ENCODE measurements at regions of chr5 and their contacts with region 1.

Region 1: GRCh38 chr5:141968914-141969608 is at the start of gene RNF14:
- DNase-seq: peak; percentile 93 to 97 (median 94)
- ATAC-seq: peak; percentile 97
- H3K4me3 ChIP-seq: peak within 1 kb of the TSS; percentile 72
- H3K27ac ChIP-seq: peak within 1 kb of the TSS; percentile 94
- H3K4me1 ChIP-seq: peaks cover 9 to 14% of the 10 kb centered on the region in 2 experiments; a peak in 3 of 5 replicates
- H3K27me3 ChIP-seq: no peaks in the 10 kb centered on the region
- CTCF ChIP-seq: peak; percentile 85 to 97 (median 86)
- EP300 ChIP-seq: no peak
- POLR2A ChIP-seq: peak; percentile 98
- RAD21 ChIP-seq: peak in 1 of 2 experiments; percentile 25; a peak in 1 of 4 replicates
- polyA plus RNA-seq, gene RNF14: 100 to 140 TPM

Region 2: DNA sequence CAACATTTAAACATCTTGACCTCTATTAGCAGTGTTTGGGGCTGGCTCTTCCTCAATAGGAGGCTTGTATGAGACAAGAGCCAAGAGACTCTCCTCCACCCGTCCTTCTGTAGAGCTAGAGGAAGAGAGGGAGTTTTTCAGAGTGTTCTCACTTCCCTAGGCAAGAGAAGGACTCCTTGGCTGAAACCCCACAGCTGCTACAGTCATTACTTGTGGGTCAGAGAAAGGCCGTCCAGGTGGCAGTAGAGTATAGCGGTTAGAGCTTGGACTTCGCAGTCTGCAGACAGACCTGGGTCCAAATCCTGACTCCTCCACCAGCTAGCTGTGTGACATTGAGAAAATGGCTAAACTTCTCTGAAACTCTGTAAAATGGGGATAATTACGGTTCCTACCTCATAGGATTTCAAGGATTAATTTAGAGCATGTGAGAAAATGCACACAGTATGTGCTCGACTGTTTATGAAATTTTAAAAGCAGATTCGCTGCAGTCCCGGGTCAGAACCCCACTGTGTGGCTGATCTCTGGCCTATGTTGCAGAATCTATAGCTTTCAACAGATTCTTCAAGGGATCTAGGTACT is 206.2 kb before region 1 on chr5:
- CTCF ChIA-PET with region 1: no interaction called
- POLR2A ChIA-PET with region 1: no interaction called
- in situ Hi-C with region 1: no loop called
- intact Hi-C with region 1: loop called (anchors 10 kb)
- DNase-seq: peak in 1 of 4 experiments; percentile 14
- ATAC-seq: peak; percentile 55
- H3K4me3 ChIP-seq: no peak overlapping the region
- H3K27ac ChIP-seq: no peak overlapping the region
- H3K4me1 ChIP-seq: peaks cover 0 to 2% of the 10 kb centered on the region in 2 experiments; a peak in 1 of 5 replicates
- H3K27me3 ChIP-seq: peaks cover 25 to 88% of the 10 kb centered on the region in 2 experiments; a peak in 4 of 5 replicates
- CTCF ChIP-seq: peak in 2 of 3 experiments; percentile 17 to 28; a peak in 2 of 6 replicates
- EP300 ChIP-seq: no peak
- POLR2A ChIP-seq: no peak
- RAD21 ChIP-seq: peak in 1 of 2 experiments; percentile 51; a peak in 2 of 4 replicates

Region 3: GRCh38 chr5:141787376-141787775 is 181.7 kb before region 1 on chr5:
- CTCF ChIA-PET with region 1: no interaction called
- POLR2A ChIA-PET with region 1: no interaction called
- in situ Hi-C with region 1: no loop called
- intact Hi-C with region 1: no loop called
- DNase-seq: no peak
- ATAC-seq: no peak
- H3K4me3 ChIP-seq: no peak overlapping the region
- H3K27ac ChIP-seq: no peak overlapping the region
- H3K4me1 ChIP-seq: no peaks in the 10 kb centered on the region
- H3K27me3 ChIP-seq: peaks cover 4 to 39% of the 10 kb centered on the region in 2 experiments; a peak in 3 of 5 replicates
- CTCF ChIP-seq: no peak
- EP300 ChIP-seq: no peak
- POLR2A ChIP-seq: no peak
- RAD21 ChIP-seq: no peak

Region 4: GRCh38 chr5:141986072-141986471 is 17.0 kb after region 1 on chr5:
- CTCF ChIA-PET with region 1: no interaction called
- POLR2A ChIA-PET with region 1: interaction called, 15 read pairs
- in situ Hi-C with region 1: no loop called
- intact Hi-C with region 1: no loop called
- DNase-seq: no peak
- ATAC-seq: no peak
- H3K4me3 ChIP-seq: no peak overlapping the region
- H3K27ac ChIP-seq: no peak overlapping the region
- H3K4me1 ChIP-seq: no peaks in the 10 kb centered on the region
- H3K27me3 ChIP-seq: no peaks in the 10 kb centered on the region
- CTCF ChIP-seq: no peak
- EP300 ChIP-seq: no peak
- POLR2A ChIP-seq: no peak
- RAD21 ChIP-seq: no peak

Region 5: GRCh38 chr5:142012792-142013388 is 43.8 kb after region 1 on chr5 and contains the start of gene GNPDA1:
- CTCF ChIA-PET with region 1: interaction called, 3 read pairs
- POLR2A ChIA-PET with region 1: interaction called, 4 read pairs
- in situ Hi-C with region 1: no loop called
- intact Hi-C with region 1: loop called (anchors 2 kb)
- DNase-seq: peak; percentile 89 to 94 (median 92)
- ATAC-seq: peak; percentile 91
- H3K4me3 ChIP-seq: peak within 1 kb of the TSS; percentile 56
- H3K27ac ChIP-seq: peak within 1 kb of the TSS; percentile 91
- H3K4me1 ChIP-seq: peaks cover 32 to 42% of the 10 kb centered on the region in 2 experiments
- H3K27me3 ChIP-seq: no peaks in the 10 kb centered on the region
- CTCF ChIP-seq: peak; percentile 8 to 26 (median 15); a peak in 2 of 6 replicates
- EP300 ChIP-seq: no peak; the same call in 1 of the 2 replicates
- POLR2A ChIP-seq: peak; percentile 89
- RAD21 ChIP-seq: no peak; a peak in 1 of 4 replicates
- polyA plus RNA-seq, gene GNPDA1: 119 to 145 TPM